ENCODE measurements at regions of chr19 and their contacts with region 1.

Region 1: DNA sequence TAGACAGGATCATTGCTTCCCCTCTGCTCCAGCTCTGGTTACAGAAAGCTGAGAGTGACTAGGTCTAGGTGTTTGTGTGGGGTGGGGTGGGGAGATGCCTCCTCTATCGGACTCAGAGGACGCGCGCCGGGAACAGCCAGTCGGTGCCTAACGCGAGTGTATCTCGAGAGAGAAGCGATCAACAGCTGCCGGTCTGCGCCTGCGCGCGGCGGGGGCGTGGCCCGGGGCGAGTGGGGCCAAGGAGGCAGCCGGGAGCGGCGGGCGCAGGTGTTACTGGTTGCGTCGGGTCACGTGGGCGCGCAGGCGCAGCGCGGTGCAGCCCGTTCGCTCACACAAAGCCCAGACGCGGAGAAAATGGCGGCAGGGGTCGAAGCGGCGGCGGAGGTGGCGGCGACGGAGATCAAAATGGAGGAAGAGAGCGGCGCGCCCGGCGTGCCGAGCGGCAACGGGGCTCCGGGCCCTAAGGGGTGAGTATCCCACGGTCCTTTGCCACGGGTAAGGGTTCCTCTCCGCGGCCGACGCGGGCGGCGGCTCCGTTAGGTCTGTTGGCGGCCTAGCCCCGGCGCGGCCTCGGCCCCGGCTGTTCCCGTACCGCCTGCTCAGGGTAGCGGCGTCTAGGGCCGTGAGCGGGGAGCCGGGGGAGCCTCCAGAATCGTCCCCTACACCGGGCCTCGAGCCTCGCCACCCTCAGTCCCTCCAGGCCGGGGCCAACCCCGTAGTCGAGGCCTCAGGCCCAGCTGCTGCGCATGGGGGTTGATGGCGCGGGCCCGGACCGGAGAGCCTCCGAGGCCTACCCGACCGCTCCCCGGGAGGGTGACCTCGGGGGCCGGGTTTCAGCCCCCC is at the start of gene HNRNPM:
- DNase-seq: peak; percentile 100
- ATAC-seq: peak; percentile 94
- H3K4me3 Mint-ChIP-seq: peak within 1 kb of the TSS; percentile 98
- H3K27ac Mint-ChIP-seq: peak within 1 kb of the TSS; percentile 96
- H3K4me1 Mint-ChIP-seq: peaks cover 42% of the 10 kb centered on the region
- H3K27me3 Mint-ChIP-seq: no peaks in the 10 kb centered on the region
- CTCF ChIP-seq: no peak
- total RNA-seq, gene HNRNPM: 282 and 287 TPM in 2 replicates

Region 2: DNA sequence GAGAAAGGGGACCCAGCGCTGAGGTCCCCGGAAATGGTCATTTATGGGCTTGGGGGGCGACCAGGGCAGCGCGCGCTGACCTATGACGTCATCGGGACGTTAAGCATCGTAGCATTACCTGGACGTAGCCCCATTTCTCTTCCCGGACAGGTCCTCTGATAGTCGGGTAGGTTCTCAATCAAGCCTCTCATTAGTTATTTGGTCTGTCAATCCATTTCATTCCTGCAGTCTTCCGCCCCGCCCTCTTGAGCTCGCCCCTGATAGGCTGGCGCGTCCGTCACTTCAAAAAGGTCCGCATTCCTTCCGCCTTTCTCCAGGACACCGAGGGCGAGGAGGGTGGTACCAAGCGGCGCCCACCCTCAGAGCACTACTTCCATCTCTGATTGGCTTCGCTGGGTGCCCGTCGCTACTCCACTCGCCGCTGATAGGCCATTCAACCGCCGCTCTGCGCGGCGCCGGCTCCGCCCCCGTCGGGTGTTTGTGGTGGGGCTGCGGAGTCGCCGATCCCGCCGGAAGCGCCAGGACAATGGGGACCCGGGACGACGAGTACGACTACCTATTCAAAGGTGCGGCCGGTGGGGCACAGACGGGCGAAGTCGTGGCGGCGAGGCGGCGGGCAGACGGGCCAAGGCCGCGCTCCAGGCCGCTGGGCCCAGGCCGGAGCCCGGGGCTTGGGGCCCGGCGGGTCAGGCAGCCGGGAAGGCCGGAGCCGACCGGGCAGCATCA is 54.8 kb before region 1 on chr19 and contains the start of gene RAB11B:
- CTCF ChIA-PET with region 1: no interaction called
- POLR2A ChIA-PET with region 1: interaction called, 7 read pairs
- intact Hi-C with region 1: loop called (anchors 1 kb)
- DNase-seq: peak; percentile 92
- ATAC-seq: peak; percentile 88
- H3K4me3 Mint-ChIP-seq: peak within 1 kb of the TSS; percentile 95
- H3K27ac Mint-ChIP-seq: peak within 1 kb of the TSS; percentile 94
- H3K4me1 Mint-ChIP-seq: peaks cover 27% of the 10 kb centered on the region
- H3K27me3 Mint-ChIP-seq: no peaks in the 10 kb centered on the region
- CTCF ChIP-seq: no peak
- total RNA-seq, gene RAB11B: 92.1 and 100 TPM in 2 replicates

Region 3: DNA sequence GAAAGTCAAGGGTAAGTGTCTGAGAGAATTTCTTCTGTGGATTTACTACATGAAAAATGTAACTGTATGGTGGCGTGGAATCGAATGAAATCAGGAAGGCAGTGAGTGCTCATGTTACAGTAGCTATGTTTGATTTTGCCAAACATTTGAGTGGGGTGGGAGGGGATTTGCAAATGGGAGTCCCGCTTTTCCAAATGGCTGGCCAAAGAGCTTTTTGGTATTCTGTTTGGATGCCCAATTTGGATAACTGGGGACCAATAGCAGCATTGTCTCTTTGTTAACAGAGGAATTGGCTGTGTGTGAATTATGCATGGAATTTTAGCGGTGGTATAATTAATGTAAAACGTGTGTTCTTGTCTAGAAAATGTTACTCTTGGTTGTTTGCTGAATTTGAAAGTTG is 17.7 kb after region 1 on chr19:
- CTCF ChIA-PET with region 1: no interaction called
- POLR2A ChIA-PET with region 1: no interaction called
- intact Hi-C with region 1: no loop called
- DNase-seq: no peak
- ATAC-seq: no peak
- H3K4me3 Mint-ChIP-seq: no peak overlapping the region
- H3K27ac Mint-ChIP-seq: no peak overlapping the region
- H3K4me1 Mint-ChIP-seq: peaks cover 48% of the 10 kb centered on the region
- H3K27me3 Mint-ChIP-seq: no peaks in the 10 kb centered on the region
- CTCF ChIP-seq: no peak

Region 4: DNA sequence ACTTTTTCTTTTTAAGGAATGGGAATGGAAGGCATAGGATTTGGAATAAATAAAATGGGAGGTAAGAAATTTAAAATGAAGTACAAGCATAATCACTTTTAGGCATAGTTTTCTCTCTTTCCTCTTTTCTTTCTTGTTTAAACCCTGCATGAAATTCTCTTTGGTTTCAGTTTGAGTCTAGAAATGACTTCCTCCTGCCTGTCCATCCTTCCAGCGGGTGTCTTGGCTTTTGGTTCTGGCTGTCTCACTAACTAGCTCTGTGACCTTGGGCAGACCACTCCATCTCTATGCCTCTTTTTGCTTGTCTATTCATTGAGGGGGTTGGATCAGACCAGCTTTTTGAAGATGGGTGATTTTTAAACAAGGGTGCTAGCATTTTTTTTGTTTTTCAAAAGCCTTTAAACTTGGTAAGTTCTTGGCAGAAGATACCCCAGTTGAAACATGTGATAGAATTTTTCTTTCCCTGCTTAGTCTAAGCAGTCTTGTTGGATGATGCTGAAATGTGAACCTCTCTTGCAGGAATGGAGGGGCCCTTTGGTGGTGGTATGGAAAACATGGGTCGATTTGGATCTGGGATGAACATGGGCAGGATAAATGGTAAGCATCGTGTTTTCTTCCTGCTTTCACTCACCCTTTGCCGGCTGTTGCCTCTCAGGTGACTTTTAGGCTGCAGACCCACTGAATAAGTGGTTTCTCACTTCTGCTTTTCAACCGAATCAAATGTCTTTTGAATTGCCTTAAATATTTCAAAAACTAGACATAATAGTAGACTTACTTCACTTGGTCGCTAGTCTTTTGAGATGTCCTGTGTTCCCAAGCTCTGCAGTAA is 29.0 kb after region 1 on chr19:
- CTCF ChIA-PET with region 1: no interaction called
- POLR2A ChIA-PET with region 1: interaction called, 12 read pairs
- intact Hi-C with region 1: loop called (anchors 1 kb)
- DNase-seq: no peak
- ATAC-seq: peak; percentile 82
- H3K4me3 Mint-ChIP-seq: peak overlapping the region; percentile 76
- H3K27ac Mint-ChIP-seq: peak overlapping the region; percentile 89
- H3K4me1 Mint-ChIP-seq: peaks cover 54% of the 10 kb centered on the region
- H3K27me3 Mint-ChIP-seq: no peaks in the 10 kb centered on the region
- CTCF ChIP-seq: no peak

Region 5: DNA sequence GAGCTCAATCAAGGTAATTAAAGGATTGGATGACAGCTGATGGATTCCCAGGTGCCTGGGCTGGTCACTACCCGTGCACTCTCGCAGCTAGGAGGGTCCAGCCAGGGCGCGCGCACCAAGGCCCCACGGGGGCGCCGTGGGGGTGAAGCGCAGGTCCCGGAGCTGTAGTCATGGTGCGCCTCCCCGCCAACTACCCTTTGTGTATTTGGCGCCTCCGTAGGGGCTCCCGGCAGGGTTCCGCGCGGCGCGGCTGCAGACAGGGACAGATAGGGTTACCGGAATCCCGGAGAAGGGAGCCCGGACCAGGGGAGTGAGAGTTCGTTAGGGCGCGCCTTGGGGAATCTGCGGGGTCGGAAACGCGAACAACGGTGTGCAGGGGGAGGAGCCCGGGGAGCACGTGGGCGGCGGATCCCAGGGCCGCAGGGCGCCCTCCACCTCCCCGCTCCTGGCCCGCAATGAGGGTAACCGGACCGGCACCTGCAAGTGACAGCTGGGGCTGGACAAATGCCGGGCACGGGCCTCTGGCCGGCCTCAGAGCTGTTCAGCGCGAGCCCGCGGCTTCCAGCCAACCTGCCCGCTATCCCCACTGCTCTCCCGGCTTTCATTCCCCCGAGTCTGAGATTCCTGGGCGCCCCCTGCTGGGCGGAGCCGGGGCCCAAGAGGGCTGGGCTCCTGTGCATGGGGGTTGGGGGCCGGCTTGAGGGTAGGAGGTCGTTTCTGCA is 61.0 kb after region 1 on chr19:
- CTCF ChIA-PET with region 1: interaction called, 3 read pairs
- POLR2A ChIA-PET with region 1: interaction called, 14 read pairs
- intact Hi-C with region 1: no loop called
- DNase-seq: peak; percentile 78
- ATAC-seq: peak; percentile 72
- H3K4me3 Mint-ChIP-seq: peak overlapping the region; percentile 91
- H3K27ac Mint-ChIP-seq: no peak overlapping the region
- H3K4me1 Mint-ChIP-seq: peaks cover 11% of the 10 kb centered on the region
- H3K27me3 Mint-ChIP-seq: peaks cover 2% of the 10 kb centered on the region
- CTCF ChIP-seq: no peak